ENCODE measurements at regions of chr1 and their contacts with region 1.

Region 1: DNA sequence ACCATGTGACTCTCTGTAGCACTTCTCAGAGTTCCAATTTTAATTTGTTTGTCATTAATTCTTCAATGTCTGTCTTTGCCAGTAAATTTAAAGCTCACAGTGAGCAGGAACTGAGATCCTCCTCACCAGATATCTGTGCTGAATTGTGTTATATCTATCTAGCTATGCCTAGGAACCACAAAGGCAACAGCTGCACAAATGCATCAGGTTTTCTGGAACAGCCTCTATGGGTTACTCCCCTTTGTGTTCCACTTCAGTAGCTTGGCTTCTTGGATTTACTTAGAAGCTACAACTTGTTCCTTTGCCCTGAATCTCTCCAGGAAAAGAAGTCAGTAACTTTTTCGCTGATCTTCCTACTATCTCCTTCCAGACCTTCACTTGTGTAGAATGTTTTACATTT is 1237.8 kb upstream of the ADGRL4 start:
- DNase-seq: no peak
- ATAC-seq: no peak
- H3K4me3 ChIP-seq: no peak overlapping the region
- H3K27ac ChIP-seq: no peak overlapping the region
- H3K4me1 ChIP-seq: no peaks in the 10 kb centered on the region
- H3K27me3 ChIP-seq: no peaks in the 10 kb centered on the region
- CTCF ChIP-seq: no peak
- POLR2A ChIP-seq: no peak
- RAD21 ChIP-seq: no peak

Region 2: GRCh38 chr1:79177844-79178243 is 1066.5 kb before region 1 on chr1:
- CTCF ChIA-PET with region 1: no interaction called
- POLR2A ChIA-PET with region 1: no interaction called
- RAD21 ChIA-PET with region 1: no interaction called
- intact Hi-C with region 1: no loop called
- DNase-seq: no peak
- ATAC-seq: no peak
- H3K4me3 ChIP-seq: no peak overlapping the region
- H3K27ac ChIP-seq: no peak overlapping the region
- H3K4me1 ChIP-seq: no peaks in the 10 kb centered on the region
- H3K27me3 ChIP-seq: no peaks in the 10 kb centered on the region
- CTCF ChIP-seq: no peak
- POLR2A ChIP-seq: no peak
- RAD21 ChIP-seq: no peak

Region 3: DNA sequence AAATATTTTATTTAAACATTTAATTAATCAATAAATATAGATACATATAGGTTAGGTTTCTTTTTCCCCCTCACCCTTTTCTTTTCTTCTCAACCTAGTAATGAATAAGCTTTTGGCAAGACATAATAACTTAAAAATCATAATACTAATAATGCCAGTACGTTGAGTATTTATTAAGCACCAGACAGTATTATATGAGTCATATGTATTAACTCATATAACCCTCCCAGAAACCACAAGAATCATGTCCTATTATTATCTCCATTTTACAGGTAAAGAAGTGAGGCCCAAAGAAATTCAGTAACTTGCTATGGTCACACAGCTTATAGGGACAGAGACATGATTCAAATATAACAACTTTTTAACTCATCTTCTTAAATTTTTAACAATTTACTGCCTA is 721.9 kb after region 1 on chr1:
- CTCF ChIA-PET with region 1: no interaction called
- POLR2A ChIA-PET with region 1: no interaction called
- RAD21 ChIA-PET with region 1: no interaction called
- intact Hi-C with region 1: loop called (anchors 5 kb)
- DNase-seq: no peak
- ATAC-seq: no peak
- H3K4me3 ChIP-seq: no peak overlapping the region
- H3K27ac ChIP-seq: no peak overlapping the region
- H3K4me1 ChIP-seq: no peaks in the 10 kb centered on the region
- H3K27me3 ChIP-seq: no peaks in the 10 kb centered on the region
- CTCF ChIP-seq: no peak
- POLR2A ChIP-seq: no peak
- RAD21 ChIP-seq: no peak

Measured in HCT116 (cell line).